Naive thymus-derived CD8-positive, alpha-beta T cell (primary cell): ENCODE measurements at regions of chr11 and their contacts with region 1.

Region 1: DNA sequence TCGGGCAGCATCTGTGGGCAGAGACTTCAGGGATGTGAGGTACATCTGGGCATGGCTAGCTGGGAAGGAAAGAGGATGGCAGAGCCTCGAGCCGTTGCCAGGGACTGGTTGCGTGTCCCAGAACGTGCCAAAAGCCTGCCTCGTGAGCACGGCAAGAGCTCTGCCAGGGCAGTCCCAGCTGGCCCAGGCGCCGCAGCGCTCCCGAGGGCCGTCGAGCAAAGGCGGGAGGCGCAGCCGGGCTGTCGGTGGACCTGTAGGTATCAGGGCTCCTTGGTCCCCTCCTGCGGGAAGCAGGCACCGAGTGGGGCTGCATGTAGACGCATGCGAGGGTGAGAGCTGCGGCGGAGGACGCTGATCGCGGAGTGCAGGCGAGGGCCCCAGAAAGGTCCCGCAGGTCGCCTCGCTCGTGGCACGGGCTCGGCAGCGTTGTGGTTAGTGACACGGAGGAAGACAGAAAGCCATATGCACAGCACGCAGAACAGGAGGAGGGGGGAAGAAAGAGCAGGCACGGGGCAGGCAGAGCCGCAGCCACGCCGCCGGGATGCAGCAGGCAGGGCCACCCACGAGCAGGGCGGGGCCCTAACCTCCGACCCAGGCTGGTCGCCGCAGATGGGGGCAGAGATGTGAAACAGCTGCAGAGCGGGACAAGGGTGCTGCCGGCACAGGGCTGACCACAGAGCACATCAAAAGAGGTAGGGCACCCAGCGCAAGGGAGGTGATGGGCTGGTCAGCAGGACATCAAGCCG is 18.0 kb downstream of the LSP1 start:
- DNase-seq: peak in 9 of 10 donors; percentile 36 to 78 (median 51)
- ATAC-seq: peak; percentile 83 to 89
- H3K4me3 Mint-ChIP-seq: peak overlapping the region; percentile 76 to 97 (median 84)
- H3K27ac Mint-ChIP-seq: peak overlapping the region; percentile 58 to 96 (median 92)
- H3K4me1 Mint-ChIP-seq: peaks cover 29 to 82% (median 63%) of the 10 kb centered on the region in 4 donors
- H3K27me3 Mint-ChIP-seq: no peaks in the 10 kb centered on the region

Region 2: GRCh38 chr11:1845561-1846452 is 25.1 kb before region 1 on chr11:
- POLR2A ChIA-PET with region 1: interaction called, 31 read pairs
- DNase-seq: peak in 6 of 10 donors; percentile 32 to 54 (median 48)
- ATAC-seq: peak; percentile 70 to 83
- H3K4me3 Mint-ChIP-seq: peak overlapping the region; percentile 66 to 94 (median 82)
- H3K27ac Mint-ChIP-seq: peak overlapping the region; percentile 83 to 98 (median 90)
- H3K4me1 Mint-ChIP-seq: peaks cover 36 to 76% (median 75%) of the 10 kb centered on the region in 4 donors
- H3K27me3 Mint-ChIP-seq: no peaks in the 10 kb centered on the region

Region 3: DNA sequence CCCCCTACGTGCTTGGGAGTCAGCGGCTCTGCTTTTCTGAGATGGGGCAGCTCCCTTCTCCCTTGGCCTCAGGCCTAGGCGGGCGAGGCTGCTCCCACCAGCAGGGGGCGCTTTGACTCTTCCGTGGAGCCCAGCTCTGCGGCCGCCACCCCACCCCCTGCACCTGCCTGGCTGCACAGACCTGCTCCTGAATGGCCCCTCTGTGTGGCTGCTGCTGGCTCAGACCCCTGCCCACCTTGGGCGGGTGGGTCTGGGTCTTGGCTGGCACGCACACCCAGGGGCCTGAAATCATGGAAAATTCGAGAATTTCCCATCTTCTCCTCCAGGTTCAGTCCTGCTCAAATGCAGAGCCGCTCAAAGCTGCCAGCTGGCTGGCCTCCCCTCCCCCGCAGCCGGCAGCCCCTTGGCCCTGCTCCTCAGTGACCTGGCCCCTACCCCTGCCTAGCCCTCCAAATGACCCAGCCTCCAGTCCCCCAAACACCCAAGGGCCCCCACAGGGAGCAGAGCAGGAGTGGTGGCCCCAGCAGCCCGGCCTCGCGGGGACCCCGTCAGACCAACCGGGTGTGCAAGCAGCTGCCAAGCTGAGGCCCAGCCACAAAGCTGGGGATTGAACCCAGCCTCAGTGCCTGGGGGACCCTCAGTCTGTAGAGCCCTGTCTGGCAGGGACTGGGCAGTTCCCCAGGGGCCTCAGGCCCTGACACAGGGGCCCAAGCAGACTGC is 11.8 kb after region 1 on chr11:
- POLR2A ChIA-PET with region 1: interaction called, 12 read pairs
- DNase-seq: peak; percentile 62 to 90 (median 80)
- ATAC-seq: peak; percentile 88 to 95
- H3K4me3 Mint-ChIP-seq: no peak overlapping the region
- H3K27ac Mint-ChIP-seq: peak overlapping the region in 5 of 10 donors; percentile 19 to 62 (median 36)
- H3K4me1 Mint-ChIP-seq: peaks cover 8 to 31% (median 27%) of the 10 kb centered on the region in 4 donors
- H3K27me3 Mint-ChIP-seq: no peaks in the 10 kb centered on the region

Region 4: GRCh38 chr11:1889224-1890120 is 18.6 kb after region 1 on chr11:
- POLR2A ChIA-PET with region 1: interaction called, 12 read pairs
- DNase-seq: peak; percentile 67 to 92 (median 85)
- ATAC-seq: peak; percentile 82 to 95
- H3K4me3 Mint-ChIP-seq: peak overlapping the region; percentile 73 to 93 (median 82)
- H3K27ac Mint-ChIP-seq: peak overlapping the region; percentile 70 to 94 (median 90)
- H3K4me1 Mint-ChIP-seq: peaks cover 31 to 54% (median 52%) of the 10 kb centered on the region in 4 donors
- H3K27me3 Mint-ChIP-seq: no peaks in the 10 kb centered on the region